ENCODE measurements at regions of chr16 and their contacts with region 1.

Region 1: DNA sequence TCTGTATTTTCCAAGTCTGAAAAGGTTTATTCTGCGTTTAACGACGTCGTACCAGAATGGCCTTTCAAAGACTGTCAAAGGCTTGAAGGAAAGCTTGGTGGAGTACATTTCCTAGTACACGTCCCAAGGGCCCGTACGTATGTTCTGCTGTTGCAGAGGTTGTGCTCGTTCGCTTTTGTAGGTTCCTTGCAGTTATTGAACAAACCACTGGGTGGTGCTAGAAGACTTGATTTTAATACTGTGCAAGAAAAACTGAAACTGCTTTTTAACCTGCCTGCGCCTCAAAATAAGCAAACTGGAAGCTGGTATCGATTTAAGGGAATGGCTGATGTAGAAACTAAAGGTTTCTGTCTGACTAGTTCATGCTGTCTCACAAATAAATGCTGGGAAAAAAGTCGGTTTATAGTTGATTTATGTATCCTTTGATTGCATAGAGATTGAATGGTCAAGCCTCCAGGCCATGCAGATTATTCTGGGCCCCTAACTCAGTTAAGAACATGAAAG is 54.6 kb downstream of the USP10 start:
- DNase-seq: peak; percentile 57 to 60
- H3K4me3 ChIP-seq: no peak overlapping the region
- H3K27ac ChIP-seq: peak overlapping the region in 2 of 3 donors; percentile 17 to 31
- H3K4me1 ChIP-seq: peaks cover 0 to 9% of the 10 kb centered on the region in 2 donors
- H3K27me3 ChIP-seq: no peaks in the 10 kb centered on the region
- CTCF ChIP-seq: peak; percentile 51 to 95 (median 82)
- POLR2A ChIP-seq: no peak

Region 2: DNA sequence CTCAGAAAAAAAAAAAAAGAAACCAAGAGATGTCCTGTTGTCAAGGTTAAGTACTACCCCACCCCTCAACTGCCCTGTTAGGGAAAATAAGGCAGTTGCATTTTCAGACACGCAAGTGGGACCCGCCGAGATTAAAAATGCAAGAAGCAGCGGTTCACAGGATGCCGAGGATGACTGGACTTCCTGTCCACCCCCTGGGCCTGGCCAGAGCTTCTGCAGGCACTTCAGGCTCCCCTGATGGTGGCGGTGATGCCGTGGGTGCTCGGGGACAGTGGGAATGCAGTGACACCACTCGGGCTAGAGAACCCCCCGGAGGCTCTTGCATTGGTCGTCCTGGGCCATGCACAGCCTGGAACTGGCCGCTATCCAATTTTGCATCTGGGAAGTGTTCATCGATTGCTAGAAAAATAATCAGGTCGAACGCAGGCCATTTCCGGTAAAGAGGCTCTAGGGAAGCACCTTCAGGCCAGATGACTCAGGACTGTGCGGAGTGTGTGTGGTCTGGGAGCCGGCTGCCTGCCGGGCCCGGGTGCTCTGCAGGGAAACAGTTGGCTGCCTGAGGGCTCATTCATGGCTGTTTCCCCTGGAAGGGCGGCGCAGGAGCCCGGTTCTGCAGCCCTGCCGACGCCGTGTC is 52.0 kb after region 1 on chr16:
- intact Hi-C with region 1: no loop called
- DNase-seq: no peak
- H3K4me3 ChIP-seq: no peak overlapping the region
- H3K27ac ChIP-seq: no peak overlapping the region
- H3K4me1 ChIP-seq: peaks cover 0 to 5% of the 10 kb centered on the region in 2 donors
- H3K27me3 ChIP-seq: no peaks in the 10 kb centered on the region
- CTCF ChIP-seq: no peak
- POLR2A ChIP-seq: no peak

Region 3: DNA sequence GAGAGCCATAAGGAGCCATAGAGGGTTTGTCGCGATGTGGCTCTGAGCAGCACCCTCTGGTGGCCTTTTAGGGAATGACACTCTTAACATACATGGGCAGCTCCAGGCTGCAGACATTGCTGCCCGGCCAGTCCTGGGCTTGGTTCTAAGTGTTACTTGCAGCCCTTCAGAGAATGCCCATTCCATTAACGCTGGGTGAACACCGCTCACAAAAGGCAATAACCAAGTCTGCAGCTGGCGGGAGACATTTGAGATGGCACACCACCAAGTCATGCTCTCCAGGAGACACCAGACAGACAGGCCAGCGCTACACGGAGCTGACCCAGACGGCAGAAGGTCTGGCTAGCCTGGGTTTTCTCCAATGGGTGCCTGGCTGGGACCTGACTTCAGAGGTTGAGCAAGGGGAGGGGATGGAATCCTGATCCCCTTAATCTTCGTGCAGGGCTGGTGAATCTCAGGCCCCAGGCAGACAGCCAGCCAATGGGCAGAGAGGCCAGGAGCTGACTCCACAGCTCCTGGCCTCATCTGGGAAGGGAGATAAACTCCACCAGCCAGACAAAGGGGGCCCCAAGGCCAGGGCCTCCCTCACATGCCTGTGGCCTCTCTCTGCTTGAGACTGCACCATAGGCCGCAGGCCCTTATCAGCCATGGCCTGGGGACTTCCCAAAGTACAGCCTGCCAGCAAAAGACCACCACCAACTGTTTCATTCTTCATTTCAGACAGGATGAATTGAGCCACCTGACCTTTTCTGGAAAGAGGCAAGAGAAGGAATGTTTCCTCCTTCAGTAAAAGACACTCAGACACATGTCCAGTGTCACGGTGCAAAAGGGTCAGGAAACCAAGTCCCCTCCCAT is 198.2 kb after region 1 on chr16:
- intact Hi-C with region 1: loop called (anchors 5 kb)
- DNase-seq: peak; percentile 81 to 83
- H3K4me3 ChIP-seq: no peak overlapping the region
- H3K27ac ChIP-seq: no peak overlapping the region
- H3K4me1 ChIP-seq: peaks cover 0 to 7% of the 10 kb centered on the region in 2 donors
- H3K27me3 ChIP-seq: no peaks in the 10 kb centered on the region
- CTCF ChIP-seq: peak; percentile 83 to 92 (median 86)
- POLR2A ChIP-seq: no peak

Region 4: GRCh38 chr16:84970447-84971127 is 216.2 kb after region 1 on chr16:
- intact Hi-C with region 1: loop called (anchors 5 kb)
- DNase-seq: peak; percentile 75 to 85
- H3K4me3 ChIP-seq: no peak overlapping the region
- H3K27ac ChIP-seq: no peak overlapping the region
- H3K4me1 ChIP-seq: peaks cover 20 to 27% of the 10 kb centered on the region in 2 donors
- H3K27me3 ChIP-seq: no peaks in the 10 kb centered on the region
- CTCF ChIP-seq: peak; percentile 83 to 94 (median 88)
- POLR2A ChIP-seq: no peak

Region 5: GRCh38 chr16:85086347-85087291 is 332.2 kb after region 1 on chr16:
- intact Hi-C with region 1: loop called (anchors 10 kb)
- DNase-seq: peak; percentile 56 to 78
- H3K4me3 ChIP-seq: no peak overlapping the region
- H3K27ac ChIP-seq: no peak overlapping the region
- H3K4me1 ChIP-seq: peaks cover 18 to 30% of the 10 kb centered on the region in 2 donors
- H3K27me3 ChIP-seq: no peaks in the 10 kb centered on the region
- CTCF ChIP-seq: peak; percentile 17 to 70 (median 47)
- POLR2A ChIP-seq: no peak

Measured in thyroid gland (tissue), 4 donors.